Naive thymus-derived CD4-positive, alpha-beta T cell (primary cell): ENCODE measurements at regions of chr9 and their contacts with region 1.

Region 1: GRCh38 chr9:114988962-114989599 is 58.7 kb upstream of the TNFSF8 start:
- DNase-seq: peak in 1 of 9 donors; percentile 53
- ATAC-seq: peak; percentile 62
- H3K4me3 ChIP-seq: no peak overlapping the region
- H3K4me3 Mint-ChIP-seq: peak overlapping the region in 8 of 10 donors; percentile 53 to 78 (median 68)
- H3K27ac ChIP-seq: no peak overlapping the region
- H3K27ac Mint-ChIP-seq: peak overlapping the region; percentile 55 to 91 (median 83)
- H3K4me1 ChIP-seq: peaks cover 5 to 24% of the 10 kb centered on the region in 2 donors
- H3K4me1 Mint-ChIP-seq: peaks cover 20 to 63% (median 35%) of the 10 kb centered on the region in 7 donors
- H3K27me3 ChIP-seq: no peaks in the 10 kb centered on the region
- H3K27me3 Mint-ChIP-seq: no peaks in the 10 kb centered on the region

Region 2: GRCh38 chr9:114674798-114675540 is 314.1 kb before region 1 on chr9:
- CTCF ChIA-PET with region 1: no interaction called
- POLR2A ChIA-PET with region 1: no interaction called
- intact Hi-C with region 1: no loop called
- DNase-seq: no peak
- ATAC-seq: no peak
- H3K4me3 ChIP-seq: no peak overlapping the region
- H3K4me3 Mint-ChIP-seq: no peak overlapping the region
- H3K27ac ChIP-seq: no peak overlapping the region
- H3K27ac Mint-ChIP-seq: no peak overlapping the region
- H3K4me1 ChIP-seq: no peaks in the 10 kb centered on the region
- H3K4me1 Mint-ChIP-seq: peaks cover 0 to 25% (median 0%) of the 10 kb centered on the region in 7 donors
- H3K27me3 ChIP-seq: peaks cover 0 to 4% of the 10 kb centered on the region in 2 donors
- H3K27me3 Mint-ChIP-seq: peaks cover 2 to 26% (median 22%) of the 10 kb centered on the region in 5 donors

Region 3: DNA sequence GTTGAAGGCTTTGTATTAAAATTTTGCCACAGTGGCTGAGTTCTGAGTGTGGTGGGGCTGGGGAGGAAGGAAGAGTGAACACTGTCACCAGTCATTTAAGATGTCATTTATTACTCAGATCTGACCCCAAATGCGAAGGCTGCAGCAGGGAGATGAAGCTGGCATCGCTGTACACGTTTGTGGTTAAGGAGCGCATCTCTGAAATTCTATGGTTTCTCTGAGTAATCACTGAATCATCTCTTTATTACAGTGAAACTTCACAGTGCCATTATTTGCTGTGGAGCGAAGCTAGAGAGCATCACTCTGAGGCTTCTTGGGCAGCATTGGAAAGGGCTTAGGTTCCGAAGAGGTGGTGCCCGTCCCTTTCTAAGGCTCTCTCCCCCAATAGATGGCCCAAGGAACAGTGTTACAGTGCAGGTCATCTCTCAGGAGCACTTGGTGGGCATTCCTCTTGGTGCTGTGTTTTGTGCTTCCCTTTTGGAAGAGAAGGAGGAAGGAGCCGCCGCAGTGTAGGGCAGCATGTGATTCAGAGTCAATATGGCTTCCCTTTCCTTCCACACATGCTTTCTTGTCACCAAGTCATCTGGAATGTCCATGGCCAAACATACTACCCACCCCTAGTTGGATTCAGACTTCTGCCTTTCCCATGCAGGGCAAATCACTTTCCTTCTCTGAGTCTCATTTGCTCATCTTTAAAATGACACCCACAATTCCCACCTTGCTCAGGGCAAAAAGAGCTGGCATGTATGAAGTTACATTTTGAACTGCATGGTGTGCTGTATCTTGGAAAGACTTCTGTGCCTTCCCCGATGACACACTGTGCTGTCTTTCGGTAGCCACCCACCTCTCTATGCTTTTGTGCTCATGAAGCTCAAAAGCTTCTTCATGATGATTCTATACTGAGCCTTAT is 297.8 kb before region 1 on chr9:
- CTCF ChIA-PET with region 1: no interaction called
- POLR2A ChIA-PET with region 1: no interaction called
- intact Hi-C with region 1: loop called in 1 of 2 experiments (anchors 1 kb)
- DNase-seq: peak in 5 of 9 donors; percentile 4 to 66 (median 6)
- ATAC-seq: peak; percentile 84
- H3K4me3 ChIP-seq: peak overlapping the region; percentile 2
- H3K4me3 Mint-ChIP-seq: peak overlapping the region in 8 of 10 donors; percentile 0 to 66 (median 12)
- H3K27ac ChIP-seq: no peak overlapping the region
- H3K27ac Mint-ChIP-seq: peak overlapping the region in 4 of 9 donors; percentile 64 to 91 (median 80)
- H3K4me1 ChIP-seq: peaks cover 0 to 24% of the 10 kb centered on the region in 2 donors
- H3K4me1 Mint-ChIP-seq: peaks cover 6 to 90% (median 12%) of the 10 kb centered on the region in 7 donors
- H3K27me3 ChIP-seq: no peaks in the 10 kb centered on the region
- H3K27me3 Mint-ChIP-seq: no peaks in the 10 kb centered on the region

Region 4: DNA sequence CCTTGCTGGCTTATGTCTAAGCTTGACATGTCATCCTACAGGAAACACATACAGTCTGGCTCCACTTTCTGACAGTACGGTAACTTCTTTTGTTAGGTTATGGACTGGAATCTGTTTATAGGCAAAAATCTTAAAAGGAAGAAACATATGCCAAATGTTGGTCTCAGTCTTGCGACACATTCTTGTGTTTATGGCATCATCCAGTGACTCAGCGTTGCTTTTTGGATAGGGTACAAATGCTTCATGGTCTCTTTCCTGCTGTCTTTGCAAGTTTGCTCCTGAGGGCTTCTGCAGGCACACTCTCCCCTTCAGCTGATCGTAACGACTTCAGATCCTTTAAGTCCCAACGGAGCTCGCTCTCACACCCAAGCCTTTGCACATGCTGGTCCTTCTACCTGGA is 35.2 kb before region 1 on chr9:
- CTCF ChIA-PET with region 1: no interaction called
- POLR2A ChIA-PET with region 1: no interaction called
- intact Hi-C with region 1: loop called in 1 of 2 experiments (anchors 1 kb)
- DNase-seq: no peak
- ATAC-seq: peak; percentile 42
- H3K4me3 ChIP-seq: no peak overlapping the region
- H3K4me3 Mint-ChIP-seq: no peak overlapping the region
- H3K27ac ChIP-seq: no peak overlapping the region
- H3K27ac Mint-ChIP-seq: no peak overlapping the region
- H3K4me1 ChIP-seq: peaks cover 5 to 6% of the 10 kb centered on the region in 2 donors
- H3K4me1 Mint-ChIP-seq: peaks cover 14 to 39% (median 21%) of the 10 kb centered on the region in 7 donors
- H3K27me3 ChIP-seq: no peaks in the 10 kb centered on the region
- H3K27me3 Mint-ChIP-seq: peaks cover 0 to 2% (median 0%) of the 10 kb centered on the region in 5 donors

Region 5: GRCh38 chr9:115006660-115007059 is 17.6 kb after region 1 on chr9:
- CTCF ChIA-PET with region 1: no interaction called
- POLR2A ChIA-PET with region 1: no interaction called
- intact Hi-C with region 1: loop called in 1 of 2 experiments (anchors 2 kb)
- DNase-seq: no peak
- ATAC-seq: peak; percentile 85
- H3K4me3 ChIP-seq: no peak overlapping the region
- H3K4me3 Mint-ChIP-seq: peak overlapping the region in 1 of 10 donors; percentile 6
- H3K27ac ChIP-seq: no peak overlapping the region
- H3K27ac Mint-ChIP-seq: peak overlapping the region in 1 of 9 donors; percentile 16
- H3K4me1 ChIP-seq: peaks cover 0 to 3% of the 10 kb centered on the region in 2 donors
- H3K4me1 Mint-ChIP-seq: peaks cover 0 to 65% (median 12%) of the 10 kb centered on the region in 7 donors
- H3K27me3 ChIP-seq: no peaks in the 10 kb centered on the region
- H3K27me3 Mint-ChIP-seq: peaks cover 0 to 10% (median 2%) of the 10 kb centered on the region in 5 donors

Region 6: DNA sequence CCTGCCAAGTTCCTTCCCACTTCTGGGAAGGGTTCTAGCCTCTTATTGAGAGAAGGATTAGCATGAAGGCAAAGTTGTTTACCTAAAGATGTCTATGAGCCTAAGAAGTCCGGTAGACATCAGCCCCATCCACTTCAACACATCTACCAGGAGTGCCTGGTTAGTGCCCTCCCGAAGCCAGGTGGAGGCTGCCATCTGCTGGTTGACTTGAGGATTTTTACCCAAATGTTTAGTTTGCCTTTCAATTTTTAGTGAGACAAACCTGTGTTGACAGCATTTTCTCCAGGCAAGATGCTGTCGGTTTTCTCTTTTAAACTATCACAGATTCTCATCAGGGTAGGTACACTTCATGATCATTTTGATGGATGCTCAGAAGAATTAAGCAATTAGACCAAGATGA is 24.9 kb after region 1 on chr9:
- CTCF ChIA-PET with region 1: interaction called, 3 read pairs
- POLR2A ChIA-PET with region 1: no interaction called
- intact Hi-C with region 1: loop called (anchors 1 to 2 kb)
- DNase-seq: peak; percentile 57 to 84 (median 79)
- ATAC-seq: peak; percentile 88
- H3K4me3 ChIP-seq: no peak overlapping the region
- H3K4me3 Mint-ChIP-seq: peak overlapping the region in 1 of 10 donors; percentile 24
- H3K27ac ChIP-seq: no peak overlapping the region
- H3K27ac Mint-ChIP-seq: peak overlapping the region in 2 of 9 donors; percentile 12 to 79
- H3K4me1 ChIP-seq: peaks cover 0 to 4% of the 10 kb centered on the region in 2 donors
- H3K4me1 Mint-ChIP-seq: peaks cover 5 to 59% (median 12%) of the 10 kb centered on the region in 7 donors
- H3K27me3 ChIP-seq: no peaks in the 10 kb centered on the region
- H3K27me3 Mint-ChIP-seq: peaks cover 4 to 14% (median 7%) of the 10 kb centered on the region in 5 donors